Activated CD4-positive, alpha-beta memory T cell treated with anti-CD3 and anti-CD28 coated beads, Interleukin-2, amount 10 ng/mL, durations not matched to agents 7 days and 5 days (primary cell): ENCODE measurements at regions of chr11 and their contacts with region 1.

Region 1: DNA sequence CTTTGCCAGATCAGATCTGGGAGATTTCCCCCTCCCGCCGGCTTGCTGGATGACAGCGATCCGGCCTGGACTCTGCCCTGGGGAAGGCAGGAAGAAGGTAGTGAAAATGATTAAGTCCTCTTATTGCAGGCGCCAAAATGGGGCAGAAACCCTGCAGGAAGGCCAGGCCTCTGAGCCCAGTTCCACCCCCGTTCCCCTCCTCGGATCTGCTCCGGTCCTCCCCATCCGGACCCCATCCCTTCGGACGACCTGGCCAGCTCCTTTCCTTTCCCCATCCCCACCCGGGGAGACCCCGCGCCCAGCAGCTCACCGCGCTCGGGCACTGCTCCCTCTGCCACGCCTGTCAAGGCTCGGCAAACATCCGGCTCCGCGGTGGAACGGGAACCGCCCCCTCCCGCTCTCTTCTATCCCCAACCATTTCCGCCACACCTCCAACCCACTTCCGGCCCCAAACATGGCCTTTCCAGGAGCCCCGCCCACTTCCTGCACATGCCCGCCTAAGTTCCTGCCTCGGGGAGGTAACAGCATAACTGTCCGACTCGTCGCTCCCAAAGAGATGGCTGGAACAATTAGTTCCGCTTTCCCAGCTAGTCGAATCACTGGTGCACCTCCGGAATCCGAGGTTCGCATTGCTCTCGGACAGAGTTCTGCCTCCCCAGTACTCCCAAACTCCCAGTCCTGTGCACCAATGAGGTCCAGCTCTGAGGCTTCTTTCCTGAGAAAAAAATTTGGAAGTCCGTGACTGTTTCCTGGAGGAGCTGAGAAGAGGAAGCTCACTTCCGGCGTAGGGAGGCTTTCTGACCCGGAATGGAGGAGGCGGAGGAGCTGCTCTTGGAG is at the starts of genes ARHGAP1 and ZNF408:
- DNase-seq: peak; percentile 100
- H3K4me3 Mint-ChIP-seq: peak within 1 kb of the TSS; percentile 98
- H3K27ac Mint-ChIP-seq: peak within 1 kb of the TSS; percentile 96
- H3K4me1 Mint-ChIP-seq: peaks cover 51% of the 10 kb centered on the region
- H3K27me3 Mint-ChIP-seq: no peaks in the 10 kb centered on the region
- total RNA-seq, gene ARHGAP1: 77.8 to 79.7 TPM
- total RNA-seq, gene ZNF408: 17.1 to 17.5 TPM

Region 2: GRCh38 chr11:46669711-46670139 is 30.7 kb before region 1 on chr11:
- CTCF ChIA-PET with region 1: interaction called, 49 read pairs
- POLR2A ChIA-PET with region 1: interaction called, 124 read pairs
- DNase-seq: no peak
- H3K4me3 Mint-ChIP-seq: no peak overlapping the region
- H3K27ac Mint-ChIP-seq: peak overlapping the region; percentile 98
- H3K4me1 Mint-ChIP-seq: peaks cover 40% of the 10 kb centered on the region
- H3K27me3 Mint-ChIP-seq: no peaks in the 10 kb centered on the region

Region 3: GRCh38 chr11:46675288-46675851 is 25.1 kb before region 1 on chr11:
- CTCF ChIA-PET with region 1: interaction called, 49 read pairs
- POLR2A ChIA-PET with region 1: interaction called, 124 read pairs
- DNase-seq: no peak
- H3K4me3 Mint-ChIP-seq: no peak overlapping the region
- H3K27ac Mint-ChIP-seq: peak overlapping the region; percentile 83
- H3K4me1 Mint-ChIP-seq: peaks cover 54% of the 10 kb centered on the region
- H3K27me3 Mint-ChIP-seq: no peaks in the 10 kb centered on the region

Region 4: DNA sequence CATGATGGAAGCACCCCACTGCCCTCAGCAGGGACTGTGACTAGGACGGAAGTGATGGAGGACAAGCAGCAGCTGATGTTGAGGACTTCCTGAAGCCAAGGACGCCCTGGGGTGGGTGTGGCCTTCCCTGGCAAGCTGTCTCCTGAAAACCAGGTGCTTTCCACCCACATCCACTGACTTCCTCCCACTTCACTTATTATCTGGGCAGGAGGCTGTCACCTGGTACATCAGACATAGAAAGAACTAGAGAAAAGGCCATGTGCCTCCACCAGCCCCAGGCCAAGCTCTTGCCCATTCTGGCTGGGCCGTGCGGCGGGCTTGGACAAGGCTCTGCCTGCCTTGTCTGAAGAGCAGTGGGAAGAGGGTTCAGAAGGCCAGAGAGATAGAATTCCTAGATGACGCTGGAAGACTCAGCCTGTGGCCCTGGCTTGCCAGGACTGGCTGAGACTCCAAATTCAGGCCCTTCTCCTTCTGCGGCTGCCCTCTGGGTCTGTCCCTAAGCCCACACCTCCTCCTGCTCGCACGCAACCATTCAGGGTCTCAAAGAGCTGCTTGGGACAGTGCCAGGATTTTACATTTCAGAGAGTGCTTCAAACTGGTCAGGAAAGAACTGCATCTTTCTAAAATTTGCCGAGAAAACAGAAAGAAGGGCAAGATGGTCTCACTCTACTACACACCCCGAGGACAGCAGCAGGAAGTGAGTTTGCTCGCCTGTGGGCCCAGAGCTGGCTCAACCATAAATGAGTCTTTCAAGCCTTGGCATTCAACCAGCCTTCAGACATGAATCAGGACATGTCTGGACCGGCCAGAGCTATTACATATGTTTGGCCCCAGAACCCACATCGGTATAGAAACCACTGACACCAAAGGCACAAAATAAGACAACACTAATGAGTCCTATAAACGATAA is 13.3 kb before region 1 on chr11:
- CTCF ChIA-PET with region 1: no interaction called
- POLR2A ChIA-PET with region 1: interaction called, 14 read pairs
- DNase-seq: no peak
- H3K4me3 Mint-ChIP-seq: no peak overlapping the region
- H3K27ac Mint-ChIP-seq: peak overlapping the region; percentile 26
- H3K4me1 Mint-ChIP-seq: peaks cover 6% of the 10 kb centered on the region
- H3K27me3 Mint-ChIP-seq: no peaks in the 10 kb centered on the region

Region 5: DNA sequence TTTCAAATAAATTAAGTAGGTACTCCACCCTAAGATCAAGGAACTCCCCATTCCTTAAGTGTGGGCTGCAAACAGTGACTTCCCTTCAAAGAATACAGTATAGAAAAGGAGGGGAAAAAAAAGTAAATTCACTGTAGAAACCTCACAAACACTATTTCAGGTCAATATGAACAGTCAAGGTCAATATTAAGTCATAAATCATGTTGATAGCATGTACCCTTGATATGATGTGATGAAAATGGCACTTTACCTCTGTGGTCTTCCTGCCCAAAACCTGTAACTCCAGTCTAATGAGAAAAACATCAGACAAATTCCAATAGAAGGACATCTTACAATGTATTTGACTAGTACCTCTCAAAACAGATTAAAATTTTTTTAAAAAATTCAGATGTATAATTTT is 137.4 kb after region 1 on chr11:
- CTCF ChIA-PET with region 1: no interaction called
- POLR2A ChIA-PET with region 1: no interaction called
- DNase-seq: no peak
- H3K4me3 Mint-ChIP-seq: no peak overlapping the region
- H3K27ac Mint-ChIP-seq: no peak overlapping the region
- H3K4me1 Mint-ChIP-seq: peaks cover 19% of the 10 kb centered on the region
- H3K27me3 Mint-ChIP-seq: no peaks in the 10 kb centered on the region